Mammary epithelial cell (primary cell): ENCODE measurements at regions of chr3 and their contacts with region 1.

Region 1: DNA sequence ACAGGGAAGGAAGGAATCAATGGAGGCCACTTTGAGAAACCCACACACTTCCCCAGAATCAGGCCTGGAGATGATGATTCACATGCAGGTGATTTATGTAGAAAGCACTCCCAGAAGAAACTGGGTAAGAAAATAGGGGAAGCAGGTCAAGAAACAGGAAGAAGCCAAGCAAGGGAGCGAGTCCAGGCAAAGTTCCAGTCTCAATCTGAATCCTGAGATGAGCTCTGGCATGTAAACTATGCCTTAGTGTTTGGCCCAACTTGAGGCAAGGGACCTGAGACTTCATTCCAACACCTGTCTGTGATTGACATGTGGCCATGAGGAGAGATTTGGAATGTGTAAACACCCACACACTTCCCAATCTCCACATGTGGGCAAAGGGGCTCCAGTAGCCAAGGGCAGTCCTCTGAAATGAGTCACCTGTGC is 61.6 kb upstream of the CTNNB1 start:
- DNase-seq: peak; percentile 96
- H3K4me3 ChIP-seq: no peak overlapping the region
- H3K27ac ChIP-seq: peak overlapping the region; percentile 92
- H3K4me1 ChIP-seq: peaks cover 26% of the 10 kb centered on the region
- H3K27me3 ChIP-seq: no peaks in the 10 kb centered on the region
- CTCF ChIP-seq: no peak

Region 2: DNA sequence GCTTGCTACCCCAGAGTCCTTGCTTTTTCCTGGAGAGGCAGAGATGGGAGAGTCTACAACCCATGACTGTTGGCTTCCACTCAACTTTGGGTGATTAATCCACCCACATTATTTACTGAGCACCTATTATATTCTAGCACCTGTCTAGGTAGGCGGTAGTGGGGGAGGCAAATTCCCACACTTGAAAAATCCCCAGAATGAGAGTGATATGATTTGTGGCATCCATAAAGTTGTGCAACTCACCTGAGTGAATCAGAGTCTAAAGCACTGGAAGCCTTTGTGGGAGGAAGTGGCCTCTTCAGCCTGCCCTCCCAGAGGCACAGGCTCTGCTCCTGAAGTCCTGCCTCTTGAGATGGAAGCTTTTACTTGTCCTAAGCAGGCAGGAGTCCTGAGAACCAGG is 21.2 kb after region 1 on chr3:
- CTCF ChIA-PET with region 1: no interaction called
- dilution Hi-C with region 1: no loop called
- in situ Hi-C with region 1: no loop called
- intact Hi-C with region 1: loop called (anchors 2 kb)
- DNase-seq: peak; percentile 99
- H3K4me3 ChIP-seq: no peak overlapping the region
- H3K27ac ChIP-seq: peak overlapping the region; percentile 79
- H3K4me1 ChIP-seq: peaks cover 21% of the 10 kb centered on the region
- H3K27me3 ChIP-seq: no peaks in the 10 kb centered on the region
- CTCF ChIP-seq: no peak

Region 3: GRCh38 chr3:41247055-41248004 is 109.6 kb after region 1 on chr3:
- CTCF ChIA-PET with region 1: no interaction called
- dilution Hi-C with region 1: no loop called
- in situ Hi-C with region 1: no loop called
- intact Hi-C with region 1: no loop called
- DNase-seq: no peak
- H3K4me3 ChIP-seq: no peak overlapping the region
- H3K27ac ChIP-seq: no peak overlapping the region
- H3K4me1 ChIP-seq: peaks cover 12% of the 10 kb centered on the region
- H3K27me3 ChIP-seq: no peaks in the 10 kb centered on the region
- CTCF ChIP-seq: no peak